ENCODE measurements at regions of chr9 and their contacts with region 1.

Region 1: DNA sequence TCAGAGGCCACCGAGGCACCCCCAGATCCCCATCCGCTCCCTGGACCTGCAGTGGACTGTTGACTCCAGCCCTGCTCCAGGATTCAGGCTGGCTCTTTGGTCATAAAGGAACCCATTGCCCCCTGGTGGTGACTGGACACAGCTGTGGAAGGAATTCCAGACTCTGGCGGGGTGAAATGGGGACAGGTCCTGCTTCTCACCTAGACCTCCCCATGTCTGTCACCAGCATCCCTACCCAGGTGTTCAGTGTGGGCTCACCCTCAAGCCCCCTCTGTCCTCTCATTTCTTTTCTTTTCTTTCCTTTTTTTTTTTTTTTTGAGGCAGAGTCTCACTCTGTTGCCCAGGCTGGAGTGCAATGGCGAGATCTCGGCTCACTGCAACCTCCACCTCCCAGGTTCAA is 25.5 kb upstream of the STXBP1 start:
- DNase-seq: peak; percentile 82
- ATAC-seq: peak; percentile 94

Region 2: GRCh38 chr9:127503947-127504782 is 82.4 kb before region 1 on chr9:
- intact Hi-C with region 1: loop called (anchors 5 kb)
- DNase-seq: peak; percentile 93
- ATAC-seq: peak; percentile 84

Region 3: DNA sequence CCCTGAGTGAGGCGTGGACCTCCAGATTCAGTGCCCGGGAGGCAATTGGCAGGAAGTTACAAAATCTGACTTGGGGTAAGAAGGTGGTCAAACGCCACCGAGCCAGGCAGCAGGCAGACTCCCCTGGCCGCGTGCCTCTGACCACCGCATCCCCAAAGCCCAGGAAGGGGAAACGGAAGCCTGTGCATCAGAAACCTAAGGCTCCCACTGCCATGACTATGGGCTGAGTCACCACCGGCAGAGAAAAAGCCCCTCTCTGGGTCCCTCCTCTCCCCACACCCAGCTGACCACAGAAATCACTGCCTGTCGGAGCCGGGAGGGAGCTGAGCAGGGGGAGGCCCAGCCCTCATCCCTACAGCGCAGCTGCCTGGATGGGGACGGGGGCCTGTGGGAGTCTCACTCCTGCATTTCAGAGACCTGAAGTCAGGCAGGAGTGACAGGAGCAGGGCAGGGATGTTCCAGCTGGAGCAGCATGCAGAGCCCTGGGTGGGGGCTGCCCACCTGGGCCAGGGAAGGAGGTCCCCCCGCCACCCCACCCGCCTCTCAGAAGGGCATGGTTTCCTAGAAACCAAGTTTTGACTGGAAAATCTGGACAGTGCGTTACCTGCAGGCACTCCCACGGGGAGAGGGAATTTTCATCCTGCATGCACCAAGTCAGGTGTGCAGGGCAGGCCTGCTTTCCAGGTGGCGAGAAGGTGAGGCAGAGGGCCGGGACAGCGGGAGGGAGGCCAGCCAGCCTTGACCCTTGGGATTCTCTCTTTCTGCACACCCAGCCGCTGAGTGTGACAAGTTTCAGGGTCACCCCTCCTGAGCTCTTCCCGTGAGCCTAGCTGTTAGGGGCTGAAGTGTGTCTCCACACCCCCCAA is 67.0 kb before region 1 on chr9:
- intact Hi-C with region 1: loop called (anchors 5 kb)
- DNase-seq: no peak
- ATAC-seq: no peak

Region 4: GRCh38 chr9:127916665-127917613 is 330.4 kb after region 1 on chr9 and contains the start of gene ST6GALNAC4:
- intact Hi-C with region 1: loop called (anchors 2 kb)
- DNase-seq: peak; percentile 97
- ATAC-seq: peak; percentile 96
- total RNA-seq, gene ST6GALNAC4: 18.1 TPM